HepG2 (cell line): ENCODE measurements at regions of chr3 and their contacts with region 1.

Region 1: GRCh38 chr3:16247276-16248061 is 17.3 kb downstream of the DPH3 start:
- DNase-seq: peak; percentile 77
- ATAC-seq: peak; percentile 82
- H3K4me3 ChIP-seq: peak overlapping the region; percentile 53 to 72 (median 55)
- H3K27ac ChIP-seq: no peak overlapping the region
- H3K4me1 ChIP-seq: peaks cover 35% of the 10 kb centered on the region
- H3K27me3 ChIP-seq: peaks cover 1 to 5% of the 10 kb centered on the region in 2 experiments; a peak in 2 of 5 replicates
- CTCF ChIP-seq: peak; percentile 94
- EP300 ChIP-seq: no peak
- POLR2A ChIP-seq: no peak
- RAD21 ChIP-seq: peak; percentile 87

Region 2: DNA sequence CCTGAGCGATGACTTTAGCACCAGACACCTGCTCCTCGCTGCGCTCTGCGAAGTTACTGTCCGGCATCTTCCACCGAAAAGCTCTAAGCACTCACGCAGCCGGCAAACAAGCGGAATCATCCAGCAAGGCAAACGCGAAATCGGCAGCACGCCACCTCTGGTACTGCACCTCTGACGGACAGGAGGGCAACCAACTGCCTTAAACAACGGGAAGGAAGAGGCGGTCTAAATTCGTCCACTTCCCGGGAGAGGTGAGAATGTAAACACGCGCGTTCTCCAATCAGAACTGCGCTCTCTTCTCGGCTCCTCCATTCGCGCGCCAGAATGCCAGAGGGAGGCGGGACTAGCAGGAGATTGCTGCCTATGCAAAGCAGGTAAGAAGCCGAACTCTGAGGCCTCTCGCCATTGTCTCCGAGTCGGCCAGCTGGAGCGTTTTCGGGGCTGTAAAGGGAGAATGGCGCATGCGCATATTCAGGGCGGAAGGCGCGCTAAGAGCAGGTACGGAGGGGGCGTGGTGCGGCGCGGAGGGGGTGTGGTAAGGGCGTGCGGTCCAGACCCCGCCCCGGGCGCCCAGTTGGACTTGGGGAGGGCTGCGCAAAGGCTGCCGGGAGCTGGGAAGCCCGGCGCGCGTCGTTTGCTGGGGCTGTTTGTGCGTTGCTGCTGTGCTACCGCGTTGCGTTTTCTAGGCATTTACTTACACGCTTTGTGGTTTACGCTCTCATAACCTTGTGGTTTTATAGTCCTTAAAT is 645.9 kb before region 1 on chr3 and contains the starts of genes BTD and HACL1:
- CTCF ChIA-PET with region 1: no interaction called
- POLR2A ChIA-PET with region 1: interaction called, 5 read pairs
- in situ Hi-C with region 1: no loop called
- intact Hi-C with region 1: loop called (anchors 10 kb)
- DNase-seq: peak; percentile 99
- ATAC-seq: peak; percentile 97
- H3K4me3 ChIP-seq: peak within 1 kb of the TSS; percentile 81 to 98 (median 90)
- H3K27ac ChIP-seq: peak within 1 kb of the TSS; percentile 94
- H3K4me1 ChIP-seq: peaks cover 40% of the 10 kb centered on the region
- H3K27me3 ChIP-seq: peaks cover 0 to 7% of the 10 kb centered on the region in 2 experiments; a peak in 1 of 5 replicates
- CTCF ChIP-seq: peak; percentile 60
- EP300 ChIP-seq: 0 out of 4 replicates have a peak, but pooled peaks of 1 of the 2 experiments have one; percentile 6
- POLR2A ChIP-seq: peak; percentile 88 to 93
- RAD21 ChIP-seq: no peak
- total RNA-seq, gene BTD: 12.4 and 15.7 TPM in 2 replicates
- total RNA-seq, gene HACL1: 25.7 and 32.0 TPM in 2 replicates

Region 3: DNA sequence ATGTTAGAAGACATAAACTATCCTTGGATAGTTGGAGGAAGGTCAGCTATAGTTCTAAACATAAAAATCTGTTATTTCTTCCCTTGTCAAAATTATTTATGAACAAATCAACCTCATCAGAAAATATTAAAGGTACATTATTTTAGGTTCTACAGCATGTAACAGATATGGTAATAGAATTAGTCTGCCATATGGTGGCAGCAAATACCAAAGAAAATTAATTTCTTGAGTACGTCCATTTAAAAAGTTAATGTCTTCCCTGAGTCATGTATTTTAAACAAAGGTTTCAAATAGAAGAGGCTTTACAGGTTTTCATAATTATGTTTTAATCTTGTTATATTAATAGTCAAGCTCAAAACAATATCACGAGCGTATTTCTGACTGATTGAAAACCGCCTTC is 431.8 kb before region 1 on chr3:
- CTCF ChIA-PET with region 1: no interaction called
- POLR2A ChIA-PET with region 1: no interaction called
- in situ Hi-C with region 1: no loop called
- intact Hi-C with region 1: loop called (anchors 10 kb)
- DNase-seq: peak; percentile 30
- ATAC-seq: no peak
- H3K4me3 ChIP-seq: no peak overlapping the region
- H3K27ac ChIP-seq: no peak overlapping the region
- H3K4me1 ChIP-seq: no peaks in the 10 kb centered on the region
- H3K27me3 ChIP-seq: no peaks in the 10 kb centered on the region
- CTCF ChIP-seq: peak; percentile 31; the same call in 1 of the 2 replicates
- EP300 ChIP-seq: no peak
- POLR2A ChIP-seq: no peak
- RAD21 ChIP-seq: no peak

Region 4: GRCh38 chr3:16060358-16060852 is 187.1 kb before region 1 on chr3:
- CTCF ChIA-PET with region 1: no interaction called
- POLR2A ChIA-PET with region 1: interaction called, 22 read pairs
- in situ Hi-C with region 1: no loop called
- intact Hi-C with region 1: loop called (anchors 5 kb)
- DNase-seq: peak; percentile 98
- ATAC-seq: peak; percentile 94
- H3K4me3 ChIP-seq: peak overlapping the region in 1 of 3 experiments; percentile 26; a peak in 1 of 6 replicates
- H3K27ac ChIP-seq: peak overlapping the region; percentile 69
- H3K4me1 ChIP-seq: peaks cover 58% of the 10 kb centered on the region
- H3K27me3 ChIP-seq: no peaks in the 10 kb centered on the region
- CTCF ChIP-seq: peak; percentile 84
- EP300 ChIP-seq: peak; percentile 64 to 96; a peak in 3 of 4 replicates
- POLR2A ChIP-seq: no peak
- RAD21 ChIP-seq: peak; percentile 15; the same call in 1 of the 2 replicates

Region 5: GRCh38 chr3:16264708-16265454 is 17.4 kb after region 1 on chr3 and contains the starts of genes DPH3 and OXNAD1:
- CTCF ChIA-PET with region 1: interaction called, 3 read pairs
- POLR2A ChIA-PET with region 1: interaction called, 112 read pairs
- in situ Hi-C with region 1: no loop called
- intact Hi-C with region 1: no loop called
- DNase-seq: peak; percentile 98
- ATAC-seq: peak; percentile 98
- H3K4me3 ChIP-seq: peak within 1 kb of the TSS; percentile 88 to 97 (median 97)
- H3K27ac ChIP-seq: peak within 1 kb of the TSS; percentile 93
- H3K4me1 ChIP-seq: peaks cover 36% of the 10 kb centered on the region
- H3K27me3 ChIP-seq: no peaks in the 10 kb centered on the region; a peak in 1 of 5 replicates
- CTCF ChIP-seq: peak; percentile 6; the same call in 1 of the 2 replicates
- EP300 ChIP-seq: peak in 1 of 2 experiments; percentile 30; a peak in 2 of 4 replicates
- POLR2A ChIP-seq: peak; percentile 88 to 95
- RAD21 ChIP-seq: 0 out of 2 replicates have a peak, but pooled peaks have one; percentile 13
- total RNA-seq, gene DPH3: 21.6 and 40.0 TPM in 2 replicates
- total RNA-seq, gene OXNAD1: 18.8 and 25.2 TPM in 2 replicates

Region 6: GRCh38 chr3:16388850-16389441 is 141.5 kb after region 1 on chr3:
- CTCF ChIA-PET with region 1: no interaction called
- POLR2A ChIA-PET with region 1: no interaction called
- in situ Hi-C with region 1: no loop called
- intact Hi-C with region 1: no loop called
- DNase-seq: no peak
- ATAC-seq: no peak
- H3K4me3 ChIP-seq: no peak overlapping the region
- H3K27ac ChIP-seq: no peak overlapping the region
- H3K4me1 ChIP-seq: no peaks in the 10 kb centered on the region
- H3K27me3 ChIP-seq: no peaks in the 10 kb centered on the region
- CTCF ChIP-seq: no peak
- EP300 ChIP-seq: no peak
- POLR2A ChIP-seq: no peak
- RAD21 ChIP-seq: no peak